Esophagus muscularis mucosa (tissue), 4 donors: ENCODE measurements at regions of chr16 and their contacts with region 1.

Region 1: DNA sequence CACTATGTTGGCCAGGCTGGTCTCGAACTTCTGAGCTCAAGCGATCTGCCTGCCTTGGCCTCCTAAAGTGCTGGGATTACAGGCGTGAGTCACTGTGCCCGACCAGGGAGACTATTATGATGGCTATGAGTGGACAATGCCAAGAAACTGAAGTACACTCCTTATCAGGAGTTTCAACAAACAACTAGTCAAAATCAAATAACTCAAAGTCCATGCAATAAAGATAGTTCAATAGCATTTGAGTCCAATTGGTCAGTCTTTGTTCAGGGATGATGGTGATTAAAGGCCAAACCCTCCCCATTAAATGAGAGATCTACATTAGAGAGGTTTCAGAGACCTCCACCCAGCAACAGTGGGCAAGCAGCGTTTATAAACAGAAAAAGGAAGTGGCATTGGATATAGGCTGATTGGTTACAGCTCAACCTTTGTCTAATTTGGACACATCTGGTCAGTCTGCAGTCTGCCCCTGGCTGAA is 8.0 kb downstream of the CHST5 start:
- DNase-seq: no peak
- H3K4me3 ChIP-seq: no peak overlapping the region
- H3K27ac ChIP-seq: no peak overlapping the region
- H3K4me1 ChIP-seq: no peaks in the 10 kb centered on the region
- H3K27me3 ChIP-seq: no peaks in the 10 kb centered on the region
- CTCF ChIP-seq: no peak
- EP300 ChIP-seq: no peak
- POLR2A ChIP-seq: no peak

Region 2: DNA sequence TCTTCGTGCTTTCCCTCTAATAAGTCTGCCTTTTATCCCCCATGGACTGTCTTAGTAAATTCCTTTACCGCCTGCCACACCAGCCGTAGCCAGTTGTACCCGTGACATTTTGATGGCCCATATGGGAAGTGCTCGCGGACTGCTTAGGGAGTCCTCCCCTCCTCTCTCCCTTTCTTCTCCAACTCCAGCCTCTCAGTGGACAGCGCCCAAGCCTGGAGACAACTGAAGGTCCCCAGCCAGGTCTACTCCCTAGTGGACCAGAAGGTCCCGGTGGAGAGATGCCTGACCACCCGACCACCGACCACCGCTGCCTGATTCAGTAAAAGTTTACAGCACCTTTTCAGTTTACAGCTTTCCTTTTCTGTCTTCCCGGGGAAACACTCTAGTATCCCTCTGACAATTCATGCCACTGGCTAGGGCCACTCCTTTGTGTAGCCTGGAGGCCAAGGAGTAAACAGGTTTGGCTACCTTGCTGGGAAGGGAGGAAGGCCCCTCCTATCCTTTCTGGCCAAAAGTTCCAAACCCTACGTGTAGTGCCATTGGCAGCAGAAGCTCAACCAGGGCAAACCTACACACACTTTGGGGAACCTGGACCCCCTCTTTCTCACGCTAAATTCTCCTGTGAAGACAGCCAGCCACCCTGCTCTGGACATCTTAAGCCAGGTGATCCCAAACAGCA is 338.9 kb before region 1 on chr16:
- intact Hi-C with region 1: loop called (anchors 10 kb)
- DNase-seq: no peak
- H3K4me3 ChIP-seq: no peak overlapping the region
- H3K27ac ChIP-seq: no peak overlapping the region
- H3K4me1 ChIP-seq: no peaks in the 10 kb centered on the region
- H3K27me3 ChIP-seq: peaks cover 0 to 3% (median 0%) of the 10 kb centered on the region in 4 donors
- CTCF ChIP-seq: no peak
- EP300 ChIP-seq: no peak
- POLR2A ChIP-seq: no peak